ENCODE measurements at regions of chr19 and their contacts with region 1.

Region 1: DNA sequence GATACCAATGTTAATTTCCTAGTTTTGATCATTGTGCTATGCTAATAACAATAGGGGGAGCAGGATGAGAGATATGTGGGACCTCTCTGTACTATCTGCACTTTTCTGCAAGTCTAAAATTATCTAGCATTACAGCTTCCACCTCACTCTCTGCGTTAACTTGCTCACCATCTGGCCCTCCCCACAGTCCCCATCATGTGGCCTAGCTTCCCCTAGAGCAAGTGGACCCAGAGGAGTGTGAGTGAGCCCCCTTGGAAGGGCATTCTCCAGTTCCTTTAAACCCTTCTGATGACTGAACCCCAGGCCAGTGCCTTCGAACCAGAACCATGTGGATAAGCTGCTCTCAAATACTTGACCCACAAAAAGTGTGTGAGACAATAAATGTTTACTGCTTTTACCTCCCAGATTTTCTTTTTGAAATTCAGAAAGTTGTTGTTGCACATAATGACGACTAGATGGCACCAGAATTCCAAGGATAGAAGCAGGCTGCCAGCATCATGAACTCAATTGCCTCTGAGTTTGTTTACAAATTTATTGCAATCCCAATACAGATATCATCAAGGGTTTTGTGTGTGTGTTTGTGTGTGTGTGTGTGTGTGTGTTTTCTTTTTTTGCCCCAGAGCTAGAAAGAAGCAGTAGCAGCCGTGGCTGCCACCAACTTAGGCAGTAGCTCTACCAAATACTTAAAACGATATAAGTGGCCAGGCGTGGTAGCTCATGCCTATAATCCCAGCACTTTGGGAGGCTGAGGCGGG is 49.0 kb upstream of the ZNF780A start:
- DNase-seq: no peak
- ATAC-seq: peak; percentile 44
- H3K4me3 ChIP-seq: no peak overlapping the region
- H3K27ac ChIP-seq: no peak overlapping the region
- H3K4me1 ChIP-seq: peaks cover 18% of the 10 kb centered on the region
- H3K27me3 ChIP-seq: no peaks in the 10 kb centered on the region
- CTCF ChIP-seq: peak; percentile 56 to 87 (median 74)
- EP300 ChIP-seq: no peak
- POLR2A ChIP-seq: no peak
- RAD21 ChIP-seq: peak; percentile 99

Region 2: GRCh38 chr19:39891267-39891561 is 248.5 kb before region 1 on chr19:
- CTCF ChIA-PET with region 1: no interaction called
- POLR2A ChIA-PET with region 1: no interaction called
- RAD21 ChIA-PET with region 1: no interaction called
- SMC1A ChIA-PET with region 1: no interaction called
- in situ Hi-C with region 1: no loop called
- intact Hi-C with region 1: no loop called
- DNase-seq: no peak
- ATAC-seq: no peak
- H3K4me3 ChIP-seq: no peak overlapping the region
- H3K27ac ChIP-seq: no peak overlapping the region
- H3K4me1 ChIP-seq: no peaks in the 10 kb centered on the region
- H3K27me3 ChIP-seq: no peaks in the 10 kb centered on the region; a peak in 1 of 4 replicates
- CTCF ChIP-seq: no peak
- EP300 ChIP-seq: no peak
- POLR2A ChIP-seq: no peak
- RAD21 ChIP-seq: no peak

Region 3: GRCh38 chr19:39996811-39997594 is 142.7 kb before region 1 on chr19 and contains the start of gene ZNF546:
- CTCF ChIA-PET with region 1: no interaction called
- POLR2A ChIA-PET with region 1: no interaction called
- RAD21 ChIA-PET with region 1: no interaction called
- SMC1A ChIA-PET with region 1: no interaction called
- in situ Hi-C with region 1: no loop called
- intact Hi-C with region 1: no loop called
- DNase-seq: peak; percentile 82
- ATAC-seq: peak; percentile 94
- H3K4me3 ChIP-seq: peak within 1 kb of the TSS; percentile 83
- H3K27ac ChIP-seq: peak within 1 kb of the TSS; percentile 79
- H3K4me1 ChIP-seq: peaks cover 4% of the 10 kb centered on the region; the same call in 1 of the 2 replicates
- H3K27me3 ChIP-seq: no peaks in the 10 kb centered on the region
- CTCF ChIP-seq: no peak; a peak in 1 of 6 replicates
- EP300 ChIP-seq: no peak
- POLR2A ChIP-seq: peak; percentile 98
- RAD21 ChIP-seq: no peak
- polyA plus RNA-seq, gene ZNF546: 0.88 to 1.4 TPM

Region 4: GRCh38 chr19:40155749-40156265 is 16.1 kb after region 1 on chr19:
- CTCF ChIA-PET with region 1: interaction called, 199 read pairs
- POLR2A ChIA-PET with region 1: interaction called, 3 read pairs
- RAD21 ChIA-PET with region 1: no interaction called
- SMC1A ChIA-PET with region 1: interaction called, 16 read pairs
- in situ Hi-C with region 1: no loop called
- intact Hi-C with region 1: no loop called
- DNase-seq: no peak
- ATAC-seq: peak; percentile 34; the same call in 2 of the 3 replicates
- H3K4me3 ChIP-seq: no peak overlapping the region
- H3K27ac ChIP-seq: no peak overlapping the region
- H3K4me1 ChIP-seq: peaks cover 12% of the 10 kb centered on the region
- H3K27me3 ChIP-seq: no peaks in the 10 kb centered on the region
- CTCF ChIP-seq: peak; percentile 25 to 50 (median 44); a peak in 4 of 6 replicates
- EP300 ChIP-seq: no peak
- POLR2A ChIP-seq: no peak
- RAD21 ChIP-seq: peak; percentile 42; the same call in 1 of the 2 replicates

Region 5: GRCh38 chr19:40165362-40165937 is 25.7 kb after region 1 on chr19:
- CTCF ChIA-PET with region 1: interaction called, 199 read pairs
- POLR2A ChIA-PET with region 1: interaction called, 4 read pairs
- RAD21 ChIA-PET with region 1: interaction called, 55 read pairs
- SMC1A ChIA-PET with region 1: interaction called, 99 read pairs
- in situ Hi-C with region 1: no loop called
- intact Hi-C with region 1: loop called (anchors 1 kb)
- DNase-seq: no peak
- ATAC-seq: peak; percentile 90
- H3K4me3 ChIP-seq: no peak overlapping the region; the same call in 1 of the 2 replicates
- H3K27ac ChIP-seq: no peak overlapping the region
- H3K4me1 ChIP-seq: peaks cover 19% of the 10 kb centered on the region
- H3K27me3 ChIP-seq: no peaks in the 10 kb centered on the region
- CTCF ChIP-seq: peak; percentile 79 to 88 (median 84)
- EP300 ChIP-seq: no peak
- POLR2A ChIP-seq: no peak
- RAD21 ChIP-seq: peak; percentile 85

Region 6: DNA sequence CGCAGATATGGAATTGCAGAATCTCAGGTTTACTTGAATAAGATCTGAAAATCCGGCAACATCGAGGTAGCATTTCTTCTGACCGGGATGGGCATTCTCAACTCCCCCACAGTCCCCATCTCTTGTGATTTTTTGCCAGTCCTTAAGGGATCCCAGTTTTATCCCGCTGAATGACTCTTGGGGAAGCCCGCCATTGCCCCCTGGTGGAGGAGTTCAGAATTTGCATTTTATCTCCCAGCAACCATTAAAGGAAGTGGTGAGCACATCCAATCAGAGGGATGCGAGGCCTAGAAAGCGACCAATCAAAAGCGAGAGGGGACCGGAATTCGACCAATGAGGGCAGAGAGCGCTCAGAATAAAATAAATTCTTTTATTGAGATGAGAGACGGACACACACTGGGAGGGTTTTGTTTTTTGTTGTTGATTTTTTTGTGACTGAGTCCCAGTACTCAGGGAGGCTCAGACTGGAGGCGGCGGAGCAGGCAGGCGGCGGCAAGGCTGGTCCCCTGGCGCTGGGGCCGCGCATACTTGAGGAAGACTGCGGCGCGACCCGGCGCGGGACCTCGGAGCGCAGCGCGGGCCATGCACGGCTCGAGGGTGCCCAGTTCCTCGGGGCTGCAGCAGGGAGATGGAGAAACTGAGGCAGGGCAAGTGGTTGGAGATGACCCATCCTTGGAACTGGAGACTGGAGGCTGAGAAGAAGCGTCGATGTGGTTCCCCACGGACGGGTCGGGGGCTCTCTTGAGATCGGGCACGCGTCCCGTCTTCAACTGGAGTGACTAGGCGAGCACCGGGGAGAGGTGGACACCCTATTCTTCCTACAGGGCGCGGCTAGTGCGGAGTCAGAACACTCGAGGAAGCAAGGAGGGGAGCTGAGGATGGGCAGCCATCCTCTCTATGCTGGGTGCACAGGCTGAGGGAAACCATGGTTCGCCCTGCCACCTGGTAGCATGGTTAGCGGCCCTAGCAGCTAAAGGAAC is 82.4 kb after region 1 on chr19:
- CTCF ChIA-PET with region 1: interaction called, 18 read pairs
- POLR2A ChIA-PET with region 1: no interaction called
- RAD21 ChIA-PET with region 1: interaction called, 7 read pairs
- SMC1A ChIA-PET with region 1: interaction called, 15 read pairs
- in situ Hi-C with region 1: loop called (anchors 5 kb)
- intact Hi-C with region 1: loop called (anchors 1 kb)
- DNase-seq: peak; percentile 51
- ATAC-seq: peak; percentile 93
- H3K4me3 ChIP-seq: no peak overlapping the region
- H3K27ac ChIP-seq: no peak overlapping the region
- H3K4me1 ChIP-seq: no peaks in the 10 kb centered on the region
- H3K27me3 ChIP-seq: peaks cover 1 to 18% of the 10 kb centered on the region in 2 experiments; a peak in 3 of 4 replicates
- CTCF ChIP-seq: peak; percentile 65 to 80 (median 76); a peak in 5 of 6 replicates
- EP300 ChIP-seq: no peak
- POLR2A ChIP-seq: no peak
- RAD21 ChIP-seq: peak; percentile 88

Region 7: GRCh38 chr19:40284501-40285352 is 145.0 kb after region 1 on chr19 and contains the start of gene AKT2:
- CTCF ChIA-PET with region 1: interaction called, 10 read pairs
- POLR2A ChIA-PET with region 1: interaction called, 3 read pairs
- RAD21 ChIA-PET with region 1: interaction called, 4 read pairs
- SMC1A ChIA-PET with region 1: no interaction called
- in situ Hi-C with region 1: no loop called
- intact Hi-C with region 1: no loop called
- DNase-seq: peak; percentile 48
- ATAC-seq: peak; percentile 59
- H3K4me3 ChIP-seq: peak within 1 kb of the TSS; percentile 99
- H3K27ac ChIP-seq: peak within 1 kb of the TSS; percentile 91
- H3K4me1 ChIP-seq: peaks cover 21% of the 10 kb centered on the region
- H3K27me3 ChIP-seq: no peaks in the 10 kb centered on the region
- CTCF ChIP-seq: no peak
- EP300 ChIP-seq: peak in 1 of 2 experiments; percentile 22; a peak in 1 of 4 replicates
- POLR2A ChIP-seq: peak; percentile 79
- RAD21 ChIP-seq: no peak
- polyA plus RNA-seq, gene AKT2: 1.0 to 2.5 TPM